SK-N-SH (cell line): ENCODE measurements at regions of chr4 and their contacts with region 1.

Region 1: DNA sequence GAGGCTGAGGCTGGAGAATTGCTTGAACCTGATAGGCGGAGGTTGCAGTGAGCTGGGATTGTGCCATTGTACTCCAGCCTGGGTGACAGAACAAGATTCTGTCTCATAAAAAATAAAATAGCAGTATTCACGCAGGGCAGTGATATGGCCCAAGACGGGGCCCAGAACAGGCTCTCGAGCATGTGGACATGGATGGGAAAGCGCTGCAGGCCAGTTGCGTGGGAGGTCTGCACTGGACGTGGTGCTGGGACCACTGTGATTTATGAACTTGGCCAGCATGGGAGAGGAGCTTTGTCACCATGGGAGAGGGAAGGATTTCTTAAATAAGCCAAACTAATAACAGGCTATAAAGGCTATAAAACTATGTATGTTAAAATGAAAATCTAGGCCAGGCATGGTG is 51.6 kb downstream of the NSD2 start:
- DNase-seq: no peak
- H3K4me3 ChIP-seq: no peak overlapping the region
- H3K27ac ChIP-seq: no peak overlapping the region
- H3K4me1 ChIP-seq: no peaks in the 10 kb centered on the region
- H3K27me3 ChIP-seq: no peaks in the 10 kb centered on the region
- CTCF ChIP-seq: no peak
- EP300 ChIP-seq: no peak
- RAD21 ChIP-seq: no peak

Region 2: GRCh38 chr4:1910643-1911042 is 12.2 kb before region 1 on chr4:
- CTCF ChIA-PET with region 1: interaction called, 14 read pairs
- POLR2A ChIA-PET with region 1: no interaction called
- DNase-seq: peak; percentile 61
- H3K4me3 ChIP-seq: no peak overlapping the region
- H3K27ac ChIP-seq: peak overlapping the region in 1 of 2 experiments; percentile 10; a peak in 1 of 4 replicates
- H3K4me1 ChIP-seq: no peaks in the 10 kb centered on the region; a peak in 2 of 4 replicates
- H3K27me3 ChIP-seq: no peaks in the 10 kb centered on the region
- CTCF ChIP-seq: peak; percentile 67
- EP300 ChIP-seq: no peak
- RAD21 ChIP-seq: peak; percentile 76

Region 3: DNA sequence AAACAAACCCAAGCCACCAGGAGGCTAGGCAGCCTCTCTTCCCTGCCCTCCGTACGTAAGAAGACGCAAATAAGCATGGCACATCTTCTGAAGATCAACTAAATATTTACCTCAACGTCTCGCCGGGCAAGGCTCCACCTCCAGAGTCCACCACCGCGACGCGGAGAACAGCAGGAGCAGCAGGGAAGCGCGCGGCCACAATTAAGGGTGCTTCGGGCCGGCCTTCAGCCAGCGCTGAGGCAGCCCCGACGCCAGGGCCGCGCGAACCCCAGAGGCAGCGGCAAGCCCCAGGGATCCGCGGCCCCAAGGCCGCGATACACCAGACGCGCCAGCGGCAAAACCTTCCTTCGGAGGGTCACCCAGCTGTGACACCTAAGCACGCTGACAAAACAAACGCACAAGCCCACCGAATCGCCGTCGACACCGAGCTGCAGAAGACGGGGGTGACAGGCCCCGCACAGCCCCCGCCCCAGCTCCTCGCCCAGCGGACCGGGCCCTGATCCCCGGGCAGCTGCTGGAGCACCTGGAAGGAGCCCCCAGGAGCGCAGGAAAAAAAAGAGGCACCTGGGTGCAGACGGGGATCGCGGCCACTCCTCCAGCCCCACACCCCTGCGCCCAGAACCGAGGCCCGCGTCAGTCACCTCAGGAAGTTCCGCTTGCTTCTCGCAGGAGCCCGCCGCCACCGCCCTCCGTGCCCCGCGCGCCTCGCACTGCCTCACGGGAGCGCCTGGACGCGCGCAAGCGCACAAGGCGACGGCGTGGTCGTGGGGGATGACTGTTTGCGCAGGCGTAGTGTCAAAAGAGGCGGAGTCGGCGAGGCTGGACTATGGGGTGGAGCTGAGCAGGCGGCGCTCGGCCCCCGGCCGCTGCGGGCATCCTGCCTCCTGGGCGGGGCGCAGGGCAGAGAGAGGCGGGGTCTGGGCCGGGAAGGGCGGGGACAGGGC is 318.9 kb after region 1 on chr4 and contains the starts of genes HAUS3 and POLN:
- CTCF ChIA-PET with region 1: no interaction called
- POLR2A ChIA-PET with region 1: no interaction called
- DNase-seq: peak; percentile 100
- H3K4me3 ChIP-seq: peak within 1 kb of the TSS; percentile 81 to 96
- H3K27ac ChIP-seq: peak within 1 kb of the TSS; percentile 24 to 65; a peak in 3 of 4 replicates
- H3K4me1 ChIP-seq: peaks cover 25 to 28% of the 10 kb centered on the region in 2 experiments; a peak in 3 of 4 replicates
- H3K27me3 ChIP-seq: no peaks in the 10 kb centered on the region
- CTCF ChIP-seq: no peak
- EP300 ChIP-seq: no peak
- RAD21 ChIP-seq: no peak
- polyA plus RNA-seq, gene HAUS3: 6.3 and 6.4 TPM in 2 replicates
- polyA plus RNA-seq, gene POLN: 0.67 and 1.2 TPM in 2 replicates